Sciatic nerve (tissue), 2 donors: ENCODE measurements at regions of chr1 and their contacts with region 1.

Region 1: GRCh38 chr1:36269408-36269838 is 36.7 kb upstream of the SH3D21 start:
- DNase-seq: no peak
- ATAC-seq: peak; percentile 22

Region 2: DNA sequence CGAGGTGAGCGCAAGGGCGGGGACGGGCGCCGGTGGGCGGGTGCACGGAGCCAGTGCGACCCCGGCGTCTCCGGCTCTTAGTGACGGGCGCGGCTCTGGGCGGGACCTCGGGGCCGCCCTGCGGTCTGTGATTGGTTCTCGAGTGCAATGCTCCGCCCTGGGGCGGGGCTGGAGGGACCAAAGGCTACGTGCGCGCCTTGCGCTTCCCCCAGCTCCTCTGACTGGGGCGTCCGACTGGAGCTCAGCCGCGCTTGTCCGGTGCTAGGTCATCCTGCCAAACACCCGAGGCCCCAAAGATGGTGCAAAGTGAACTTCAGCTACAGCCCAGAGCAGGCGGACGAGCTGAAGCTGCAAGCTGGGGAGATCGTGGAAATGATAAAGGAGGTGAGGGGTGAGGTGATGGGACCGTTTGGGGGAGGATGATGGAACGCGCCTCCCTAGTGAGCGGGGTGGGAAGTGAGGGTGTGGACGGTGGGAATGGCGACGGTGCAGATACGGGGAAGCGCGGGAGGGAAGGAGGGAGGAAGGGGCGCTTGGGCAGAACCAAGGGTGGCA is 37.6 kb after region 1 on chr1:
- intact Hi-C with region 1: loop called (anchors 1 kb)
- DNase-seq: peak; percentile 94
- ATAC-seq: peak; percentile 97